WTC11 (cell line): ENCODE measurements at regions of chr4 and their contacts with region 1.

Region 1: GRCh38 chr4:180407275-180407885 is 1835.8 kb upstream of the TENM3 start:
- DNase-seq: no peak
- ATAC-seq: no peak
- H3K4me3 Mint-ChIP-seq: no peak overlapping the region
- H3K27ac Mint-ChIP-seq: no peak overlapping the region
- H3K4me1 Mint-ChIP-seq: no peaks in the 10 kb centered on the region
- H3K27me3 Mint-ChIP-seq: no peaks in the 10 kb centered on the region
- CTCF ChIP-seq: no peak

Region 2: GRCh38 chr4:180625653-180626052 is 218.3 kb after region 1 on chr4:
- CTCF ChIA-PET with region 1: no interaction called
- POLR2A ChIA-PET with region 1: interaction called, 10 read pairs
- DNase-seq: no peak
- ATAC-seq: no peak
- H3K4me3 Mint-ChIP-seq: no peak overlapping the region
- H3K27ac Mint-ChIP-seq: no peak overlapping the region
- H3K4me1 Mint-ChIP-seq: peaks cover 7% of the 10 kb centered on the region
- H3K27me3 Mint-ChIP-seq: no peaks in the 10 kb centered on the region
- CTCF ChIP-seq: no peak